Endothelial cell of umbilical vein (primary cell): ENCODE measurements at regions of chr14 and their contacts with region 1.

Region 1: DNA sequence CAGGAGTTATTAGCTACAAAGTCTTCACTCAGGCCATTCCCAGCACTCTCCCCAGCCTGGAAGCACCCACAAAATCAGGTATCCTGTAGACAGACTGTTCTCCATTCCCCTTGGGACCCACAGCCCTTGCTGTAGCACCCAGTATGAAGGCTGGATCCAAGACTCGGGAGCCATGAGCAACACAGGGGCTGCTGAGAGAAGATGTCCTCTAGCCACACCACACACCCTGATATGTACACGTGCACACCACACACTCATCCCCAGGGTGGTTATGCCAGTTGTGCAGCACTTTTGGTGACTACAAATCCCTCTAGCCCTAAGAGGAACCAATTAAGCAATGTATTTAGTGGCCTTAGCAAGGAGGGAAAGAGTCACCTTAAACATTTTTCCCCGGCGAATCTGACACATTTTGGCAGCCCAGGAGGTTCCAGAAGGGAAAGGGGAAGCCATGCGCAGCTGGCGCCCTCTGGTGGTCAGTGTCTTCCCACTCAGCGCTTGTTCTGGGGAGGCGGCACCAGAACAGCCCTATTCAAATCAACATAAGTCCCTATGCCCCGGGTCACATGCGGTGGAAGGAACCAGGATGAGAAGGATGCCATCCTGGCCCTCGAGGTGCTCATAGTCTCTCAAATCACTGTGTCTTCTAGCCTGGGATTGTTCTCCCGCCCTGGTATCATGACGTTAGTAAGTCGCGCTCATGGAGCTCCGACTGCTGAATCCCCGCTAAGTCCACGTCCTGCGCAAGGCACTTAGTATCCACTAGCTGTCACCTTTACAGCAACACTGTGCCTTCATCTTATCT is 96.9 kb downstream of the GCH1 start:
- DNase-seq: peak; percentile 81
- H3K4me3 ChIP-seq: no peak overlapping the region
- H3K27ac ChIP-seq: no peak overlapping the region
- H3K4me1 ChIP-seq: no peaks in the 10 kb centered on the region
- H3K27me3 ChIP-seq: peaks cover 0 to 2% of the 10 kb centered on the region in 2 experiments
- CTCF ChIP-seq: peak; percentile 90 to 95
- POLR2A ChIP-seq: no peak

Region 2: DNA sequence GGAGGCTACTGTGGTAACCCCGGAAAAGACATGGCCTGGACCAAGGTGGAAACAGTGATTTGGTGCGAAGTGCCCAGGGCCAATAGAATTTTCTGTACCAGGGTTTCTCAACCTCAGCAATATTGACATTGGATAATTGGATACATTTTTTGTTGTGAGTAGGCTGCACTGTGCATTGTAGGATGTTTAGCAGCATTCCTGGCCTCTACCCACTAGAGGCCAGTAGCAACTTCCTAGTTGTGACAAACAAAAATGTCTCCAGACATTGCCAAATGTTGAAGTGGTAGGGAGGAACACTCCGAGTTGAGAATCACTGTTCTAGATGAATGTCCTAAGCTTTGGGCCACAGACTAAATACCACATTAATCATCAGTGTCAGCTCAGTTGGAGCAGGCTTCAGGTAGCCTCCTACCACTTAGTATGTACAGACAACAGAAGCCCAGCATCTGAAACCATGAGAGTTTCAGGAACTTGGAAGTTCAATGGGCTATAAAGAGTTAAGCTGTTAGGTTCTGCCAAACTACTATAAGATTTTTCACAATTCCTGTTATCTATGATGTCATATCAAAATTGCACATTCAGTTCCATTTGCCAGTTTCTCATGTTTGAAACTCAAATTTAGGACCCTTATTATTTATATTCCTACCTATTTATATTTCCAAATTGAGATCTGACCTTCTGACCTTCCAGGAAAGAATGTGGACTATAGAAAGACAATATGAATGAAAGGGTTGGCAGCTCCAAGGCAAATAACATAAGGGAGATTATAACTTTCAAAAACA is 302.1 kb before region 1 on chr14:
- CTCF ChIA-PET with region 1: interaction called, 13 read pairs
- POLR2A ChIA-PET with region 1: no interaction called
- dilution Hi-C with region 1: no loop called
- intact Hi-C with region 1: loop called (anchors 5 kb)
- DNase-seq: peak; percentile 37
- H3K4me3 ChIP-seq: no peak overlapping the region
- H3K27ac ChIP-seq: no peak overlapping the region
- H3K4me1 ChIP-seq: no peaks in the 10 kb centered on the region
- H3K27me3 ChIP-seq: peaks cover 0 to 8% of the 10 kb centered on the region in 2 experiments
- CTCF ChIP-seq: peak; percentile 39 to 43
- POLR2A ChIP-seq: no peak

Region 3: GRCh38 chr14:54555651-54556050 is 250.1 kb before region 1 on chr14:
- CTCF ChIA-PET with region 1: interaction called, 13 read pairs
- POLR2A ChIA-PET with region 1: no interaction called
- dilution Hi-C with region 1: no loop called
- intact Hi-C with region 1: loop called (anchors 2 kb)
- DNase-seq: no peak
- H3K4me3 ChIP-seq: no peak overlapping the region
- H3K27ac ChIP-seq: no peak overlapping the region
- H3K4me1 ChIP-seq: no peaks in the 10 kb centered on the region
- H3K27me3 ChIP-seq: peaks cover 2 to 3% of the 10 kb centered on the region in 2 experiments
- CTCF ChIP-seq: peak; percentile 5 to 6
- POLR2A ChIP-seq: no peak

Region 4: GRCh38 chr14:54881235-54881760 is 75.6 kb after region 1 on chr14:
- CTCF ChIA-PET with region 1: interaction called, 14 read pairs
- POLR2A ChIA-PET with region 1: no interaction called
- dilution Hi-C with region 1: no loop called
- intact Hi-C with region 1: no loop called
- DNase-seq: no peak
- H3K4me3 ChIP-seq: peak overlapping the region; percentile 22 to 85 (median 27)
- H3K27ac ChIP-seq: peak overlapping the region; percentile 49
- H3K4me1 ChIP-seq: peaks cover 23% of the 10 kb centered on the region
- H3K27me3 ChIP-seq: no peaks in the 10 kb centered on the region
- CTCF ChIP-seq: no peak
- POLR2A ChIP-seq: no peak